IMR-90 (cell line): ENCODE measurements at regions of chr5 and their contacts with region 1.

Region 1: GRCh38 chr5:178732281-178732680 is 1.8 kb upstream of the ZNF354A start:
- DNase-seq: no peak
- ATAC-seq: no peak
- H3K4me3 ChIP-seq: no peak overlapping the region
- H3K27ac ChIP-seq: no peak overlapping the region
- H3K4me1 ChIP-seq: no peaks in the 10 kb centered on the region
- H3K27me3 ChIP-seq: no peaks in the 10 kb centered on the region
- CTCF ChIP-seq: no peak
- POLR2A ChIP-seq: no peak
- RAD21 ChIP-seq: no peak

Region 2: GRCh38 chr5:178279725-178280438 is 452.4 kb before region 1 on chr5:
- CTCF ChIA-PET with region 1: no interaction called
- POLR2A ChIA-PET with region 1: no interaction called
- dilution Hi-C with region 1: no loop called
- in situ Hi-C with region 1: no loop called
- intact Hi-C with region 1: loop called (anchors 2 kb)
- DNase-seq: peak; percentile 59
- ATAC-seq: peak; percentile 97
- H3K4me3 ChIP-seq: no peak overlapping the region
- H3K27ac ChIP-seq: no peak overlapping the region
- H3K4me1 ChIP-seq: no peaks in the 10 kb centered on the region
- H3K27me3 ChIP-seq: no peaks in the 10 kb centered on the region; the same call in 1 of the 2 replicates
- CTCF ChIP-seq: peak; percentile 62
- POLR2A ChIP-seq: no peak
- RAD21 ChIP-seq: peak; percentile 70

Region 3: GRCh38 chr5:178859625-178860531 is 127.6 kb after region 1 on chr5 and contains the start of gene ZNF354B:
- CTCF ChIA-PET with region 1: interaction called, 3 read pairs
- POLR2A ChIA-PET with region 1: no interaction called
- dilution Hi-C with region 1: loop called (anchors 10 kb)
- in situ Hi-C with region 1: no loop called
- intact Hi-C with region 1: loop called (anchors 1 kb)
- DNase-seq: peak; percentile 92
- ATAC-seq: peak; percentile 97
- H3K4me3 ChIP-seq: peak within 1 kb of the TSS; percentile 73
- H3K27ac ChIP-seq: peak within 1 kb of the TSS; percentile 49
- H3K4me1 ChIP-seq: peaks cover 2% of the 10 kb centered on the region; the same call in 1 of the 2 replicates
- H3K27me3 ChIP-seq: no peaks in the 10 kb centered on the region
- CTCF ChIP-seq: 0 out of 2 replicates have a peak, but pooled peaks have one; percentile 7
- POLR2A ChIP-seq: peak; percentile 50; the same call in 1 of the 2 replicates
- RAD21 ChIP-seq: no peak
- total RNA-seq, gene ZNF354B: 5.0 TPM in 2 replicates

Region 4: DNA sequence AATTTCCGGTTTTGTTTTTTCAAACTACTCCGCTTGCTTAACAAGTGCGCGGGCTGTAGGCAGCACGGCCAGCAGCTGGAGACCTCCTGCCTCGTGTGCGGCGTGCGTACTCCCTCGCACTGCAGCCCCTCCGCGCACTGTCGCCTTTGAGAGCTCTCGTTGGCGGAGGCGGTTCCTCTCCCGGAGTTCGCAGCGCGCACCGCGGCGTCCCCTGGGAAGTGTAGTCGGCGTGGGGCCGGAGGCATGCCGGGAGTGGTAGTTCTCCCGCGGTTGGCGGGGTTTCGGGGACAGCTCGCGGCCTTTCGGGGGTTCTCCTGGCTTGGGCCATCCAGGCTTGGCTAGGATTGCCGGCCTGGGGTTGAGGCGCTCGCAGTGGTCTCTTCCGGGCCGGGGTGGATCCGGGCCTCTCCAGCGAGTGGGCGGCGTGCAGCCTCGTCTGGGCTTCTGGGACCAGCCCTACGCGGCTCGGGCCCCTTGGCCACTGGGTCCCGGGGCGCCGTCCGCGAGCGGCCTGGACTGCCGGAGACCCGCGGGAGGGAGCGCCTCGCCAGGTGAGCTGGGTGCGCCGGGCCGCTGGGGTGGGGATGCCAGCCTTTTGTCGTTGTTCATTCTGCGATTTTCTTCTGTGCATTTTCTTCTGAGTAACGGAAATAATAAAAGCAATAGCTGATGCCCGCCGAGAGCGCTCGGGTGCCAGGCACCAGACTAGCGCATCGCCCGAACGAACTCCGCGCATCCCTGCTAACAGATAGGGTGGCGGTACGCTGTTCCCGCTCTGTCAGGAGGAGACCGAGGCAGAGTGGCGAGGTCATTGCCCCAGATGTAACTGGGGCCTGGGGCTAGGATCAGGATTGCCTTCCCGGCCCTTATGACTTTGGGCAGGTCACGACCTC is 328.1 kb after region 1 on chr5 and contains the start of gene ZNF354C:
- CTCF ChIA-PET with region 1: no interaction called
- POLR2A ChIA-PET with region 1: no interaction called
- dilution Hi-C with region 1: no loop called
- in situ Hi-C with region 1: no loop called
- intact Hi-C with region 1: loop called (anchors 1 kb)
- DNase-seq: peak; percentile 87
- ATAC-seq: peak; percentile 99
- H3K4me3 ChIP-seq: peak within 1 kb of the TSS; percentile 67
- H3K27ac ChIP-seq: peak within 1 kb of the TSS; percentile 40
- H3K4me1 ChIP-seq: peaks cover 4% of the 10 kb centered on the region; the same call in 1 of the 2 replicates
- H3K27me3 ChIP-seq: no peaks in the 10 kb centered on the region
- CTCF ChIP-seq: no peak
- POLR2A ChIP-seq: 0 out of 2 replicates have a peak, but pooled peaks have one; percentile 33
- RAD21 ChIP-seq: no peak
- total RNA-seq, gene ZNF354C: 5.6 and 7.2 TPM in 2 replicates

Region 5: DNA sequence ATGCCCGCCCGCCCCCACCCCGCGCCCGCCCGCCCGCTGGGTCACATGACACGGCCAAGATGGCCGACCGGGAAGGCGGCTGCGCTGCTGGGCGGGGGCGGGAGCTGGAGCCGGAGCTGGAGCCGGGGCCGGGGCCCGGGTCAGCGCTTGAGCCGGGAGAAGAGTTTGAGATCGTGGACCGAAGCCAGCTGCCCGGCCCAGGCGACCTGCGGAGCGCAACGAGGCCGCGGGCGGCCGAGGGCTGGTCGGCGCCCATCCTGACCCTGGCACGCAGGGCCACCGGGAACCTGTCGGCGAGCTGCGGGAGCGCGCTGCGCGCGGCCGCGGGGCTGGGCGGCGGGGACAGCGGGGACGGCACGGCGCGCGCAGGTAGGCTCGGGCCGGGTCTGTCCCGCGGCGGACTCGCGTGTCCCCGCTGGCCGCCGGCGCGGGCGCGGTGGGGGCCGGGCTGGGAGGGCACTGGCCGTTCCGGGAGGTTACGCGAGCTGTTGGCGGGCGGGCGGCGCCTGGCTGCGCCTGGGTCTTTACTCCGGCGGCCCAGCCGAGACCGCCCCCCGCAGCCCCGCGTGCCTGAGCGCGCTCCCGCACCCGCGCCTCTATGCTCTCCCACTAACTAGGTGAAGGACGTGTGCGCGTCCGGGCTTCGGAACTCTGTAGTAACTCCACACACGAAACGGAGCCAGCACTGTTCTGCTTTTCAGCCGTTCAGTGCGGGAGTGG is 818.4 kb after region 1 on chr5 and contains the start of gene RUFY1:
- CTCF ChIA-PET with region 1: no interaction called
- POLR2A ChIA-PET with region 1: no interaction called
- dilution Hi-C with region 1: no loop called
- in situ Hi-C with region 1: no loop called
- intact Hi-C with region 1: loop called (anchors 5 kb)
- DNase-seq: peak; percentile 74
- ATAC-seq: peak; percentile 77
- H3K4me3 ChIP-seq: peak within 1 kb of the TSS; percentile 99
- H3K27ac ChIP-seq: peak within 1 kb of the TSS; percentile 99
- H3K4me1 ChIP-seq: peaks cover 15% of the 10 kb centered on the region; the same call in 1 of the 2 replicates
- H3K27me3 ChIP-seq: no peaks in the 10 kb centered on the region
- CTCF ChIP-seq: no peak
- POLR2A ChIP-seq: peak; percentile 76
- RAD21 ChIP-seq: no peak
- total RNA-seq, gene RUFY1: 19.5 and 27.8 TPM in 2 replicates